ENCODE measurements at regions of chrX and their contacts with region 1.

Region 1: GRCh38 chrX:47644557-47645091 is 5.7 kb downstream of the ELK1 start:
- DNase-seq: peak; percentile 44
- ATAC-seq: peak; percentile 33; the same call in 1 of the 2 replicates
- H3K4me3 ChIP-seq: no peak overlapping the region
- H3K27ac ChIP-seq: no peak overlapping the region
- H3K4me1 ChIP-seq: peaks cover 5% of the 10 kb centered on the region
- H3K27me3 ChIP-seq: no peaks in the 10 kb centered on the region
- CTCF ChIP-seq: peak; percentile 53
- POLR2A ChIP-seq: no peak
- RAD21 ChIP-seq: peak; percentile 40; the same call in 1 of the 2 replicates

Region 2: DNA sequence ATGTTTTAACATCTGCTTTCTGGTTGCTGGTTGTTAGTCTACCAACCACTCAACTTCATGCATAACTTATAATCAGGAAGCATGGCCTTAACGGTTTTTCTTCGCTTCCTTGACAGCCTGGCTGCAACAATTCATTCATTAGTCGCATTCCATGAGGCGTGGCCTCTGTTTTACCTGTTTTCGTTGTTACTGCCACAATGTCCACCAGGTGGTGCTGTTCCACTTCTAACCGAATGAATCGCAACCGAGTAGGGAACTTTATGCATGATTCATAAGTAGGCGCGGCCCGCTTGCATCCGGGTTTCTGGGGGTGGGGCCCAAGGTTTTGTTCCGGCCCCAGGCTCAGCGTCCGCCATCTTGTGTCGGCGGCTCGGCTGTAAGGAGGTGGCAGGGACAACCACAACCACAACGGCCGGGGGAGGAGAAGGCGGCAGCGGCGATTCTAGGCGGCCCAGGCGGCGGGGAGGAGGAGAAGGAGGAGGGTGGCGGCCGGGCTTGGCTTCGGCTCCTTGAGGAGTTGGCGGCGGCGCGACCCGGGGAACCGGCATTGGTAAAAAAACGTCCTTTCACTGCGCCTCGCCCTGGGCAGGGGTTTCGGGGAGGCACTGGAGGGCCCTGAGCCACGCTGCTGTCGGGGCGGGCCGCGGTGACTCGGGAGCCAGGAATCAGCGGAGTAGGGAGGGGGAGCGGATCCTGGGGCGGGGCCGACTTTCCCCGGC is 451.0 kb before region 1 on chrX and contains the start of gene UBA1:
- CTCF ChIA-PET with region 1: no interaction called
- POLR2A ChIA-PET with region 1: no interaction called
- dilution Hi-C with region 1: no loop called
- in situ Hi-C with region 1: no loop called
- intact Hi-C with region 1: loop called (anchors 5 kb)
- DNase-seq: peak; percentile 95
- ATAC-seq: peak; percentile 82
- H3K4me3 ChIP-seq: peak within 1 kb of the TSS; percentile 74
- H3K27ac ChIP-seq: peak within 1 kb of the TSS; percentile 87
- H3K4me1 ChIP-seq: peaks cover 24% of the 10 kb centered on the region
- H3K27me3 ChIP-seq: no peaks in the 10 kb centered on the region; the same call in 1 of the 2 replicates
- CTCF ChIP-seq: peak; percentile 92
- POLR2A ChIP-seq: peak; percentile 94
- RAD21 ChIP-seq: peak; percentile 92
- total RNA-seq, gene UBA1: 256 and 299 TPM in 2 replicates

Region 3: GRCh38 chrX:47497273-47497672 is 147.4 kb before region 1 on chrX:
- CTCF ChIA-PET with region 1: no interaction called
- POLR2A ChIA-PET with region 1: no interaction called
- dilution Hi-C with region 1: no loop called
- in situ Hi-C with region 1: no loop called
- intact Hi-C with region 1: loop called (anchors 1 kb)
- DNase-seq: peak; percentile 38
- ATAC-seq: no peak
- H3K4me3 ChIP-seq: no peak overlapping the region
- H3K27ac ChIP-seq: no peak overlapping the region
- H3K4me1 ChIP-seq: peaks cover 3% of the 10 kb centered on the region; the same call in 1 of the 2 replicates
- H3K27me3 ChIP-seq: peaks cover 3% of the 10 kb centered on the region
- CTCF ChIP-seq: peak; percentile 59
- POLR2A ChIP-seq: no peak
- RAD21 ChIP-seq: peak; percentile 72

Region 4: DNA sequence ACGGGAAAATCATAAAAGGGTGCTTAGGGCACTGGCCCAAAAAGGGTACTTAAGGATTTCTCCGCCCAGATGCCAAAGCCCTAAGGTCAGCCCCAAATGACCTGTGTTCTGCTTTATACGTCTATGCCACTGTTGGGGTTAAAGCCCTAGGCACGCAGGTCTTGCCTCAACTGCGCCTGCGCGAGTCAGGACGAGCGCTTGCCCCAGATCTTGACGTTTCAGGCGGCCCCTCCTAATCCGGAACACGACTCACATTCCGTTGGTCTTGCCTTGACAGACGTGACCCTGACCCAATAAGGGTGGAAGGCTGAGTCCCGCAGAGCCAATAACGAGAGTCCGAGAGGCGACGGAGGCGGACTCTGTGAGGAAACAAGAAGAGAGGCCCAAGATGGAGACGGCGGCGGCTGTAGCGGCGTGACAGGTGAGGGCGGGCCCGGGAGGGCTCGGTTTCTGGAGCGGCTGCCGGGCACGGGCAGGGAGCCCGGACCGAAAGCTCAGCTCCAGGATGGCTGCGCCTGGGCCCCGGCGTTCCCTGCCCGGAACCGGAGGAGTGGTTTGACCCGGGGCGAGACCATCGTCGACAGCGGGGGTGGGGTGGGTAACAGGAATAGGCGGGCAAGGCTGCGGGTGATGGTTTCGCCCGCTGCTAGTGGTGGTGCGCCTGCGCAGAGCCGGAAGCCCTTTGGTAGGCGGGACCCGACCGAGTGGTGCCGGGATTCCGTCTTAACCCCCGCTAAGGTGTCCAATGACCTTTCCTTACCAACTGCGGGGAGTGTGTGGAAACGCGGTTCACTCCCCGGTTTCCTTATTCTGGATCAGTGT is 83.6 kb before region 1 on chrX and contains the start of gene ARAF:
- CTCF ChIA-PET with region 1: interaction called, 3 read pairs
- POLR2A ChIA-PET with region 1: no interaction called
- dilution Hi-C with region 1: no loop called
- in situ Hi-C with region 1: loop called (anchors 5 kb)
- intact Hi-C with region 1: loop called (anchors 1 kb)
- DNase-seq: peak; percentile 99
- ATAC-seq: peak; percentile 89
- H3K4me3 ChIP-seq: peak within 1 kb of the TSS; percentile 72
- H3K27ac ChIP-seq: peak within 1 kb of the TSS; percentile 96
- H3K4me1 ChIP-seq: 0 out of 2 replicates have a peak, but pooled peaks cover 1% of the 10 kb centered on the region
- H3K27me3 ChIP-seq: no peaks in the 10 kb centered on the region
- CTCF ChIP-seq: no peak
- POLR2A ChIP-seq: peak; percentile 76; the same call in 1 of the 2 replicates
- RAD21 ChIP-seq: no peak
- total RNA-seq, gene ARAF: 9.1 and 10.8 TPM in 2 replicates

Region 5: DNA sequence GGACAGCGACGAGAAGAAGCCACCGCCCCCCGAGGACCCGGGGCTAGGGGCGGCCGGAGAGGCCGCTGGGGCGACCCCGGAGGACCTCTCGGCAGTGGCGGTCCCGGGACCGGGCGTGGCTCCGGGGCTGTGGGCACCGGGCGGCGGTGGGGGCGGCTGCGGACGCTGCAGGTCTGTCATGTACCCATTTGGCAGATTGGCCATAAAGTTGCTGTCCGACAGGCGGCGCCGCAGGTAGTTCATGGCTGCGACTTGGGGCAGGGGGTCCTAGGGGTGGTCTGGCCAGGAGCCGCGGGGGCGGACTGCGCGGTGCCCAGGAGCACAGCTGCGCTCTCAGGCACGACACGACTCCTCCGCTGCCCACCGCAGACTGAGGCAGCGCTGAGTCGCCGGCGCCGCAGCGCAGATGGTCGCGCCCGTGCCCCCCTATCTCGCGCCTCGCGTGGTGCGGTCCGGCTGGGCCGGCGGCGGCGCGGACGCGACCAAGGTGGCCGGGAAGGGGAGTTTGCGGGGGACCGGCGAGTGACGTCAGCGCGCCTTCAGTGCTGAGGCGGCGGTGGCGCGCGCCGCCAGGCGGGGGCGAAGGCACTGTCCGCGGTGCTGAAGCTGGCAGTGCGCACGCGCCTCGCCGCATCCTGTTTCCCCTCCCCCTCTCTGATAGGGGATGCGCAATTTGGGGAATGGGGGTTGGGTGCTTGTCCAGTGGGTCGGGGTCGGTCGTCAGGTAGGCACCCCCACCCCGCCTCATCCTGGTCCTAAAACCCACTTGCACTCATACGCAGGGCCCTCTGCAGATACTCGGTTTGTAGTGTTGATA is 24.9 kb before region 1 on chrX and contains the start of gene SYN1:
- CTCF ChIA-PET with region 1: interaction called, 3 read pairs
- POLR2A ChIA-PET with region 1: interaction called, 13 read pairs
- dilution Hi-C with region 1: no loop called
- in situ Hi-C with region 1: no loop called
- intact Hi-C with region 1: no loop called
- DNase-seq: peak; percentile 74
- ATAC-seq: peak; percentile 91
- H3K4me3 ChIP-seq: peak within 1 kb of the TSS; percentile 45
- H3K27ac ChIP-seq: no peak within 1 kb of the TSS
- H3K4me1 ChIP-seq: no peaks in the 10 kb centered on the region
- H3K27me3 ChIP-seq: peaks cover 7% of the 10 kb centered on the region; the same call in 1 of the 2 replicates
- CTCF ChIP-seq: no peak
- POLR2A ChIP-seq: no peak
- RAD21 ChIP-seq: no peak
- total RNA-seq, gene SYN1: under 0.01 TPM in 2 replicates